ENCODE measurements at regions of chr16 and their contacts with region 1.

Region 1: GRCh38 chr16:788394-789126 is at the start of gene CHTF18:
- DNase-seq: peak; percentile 45
- ATAC-seq: peak; percentile 91
- H3K4me3 ChIP-seq: peak within 1 kb of the TSS; percentile 89
- H3K27ac ChIP-seq: peak within 1 kb of the TSS; percentile 69
- H3K4me1 ChIP-seq: peaks cover 9% of the 10 kb centered on the region
- H3K27me3 ChIP-seq: no peaks in the 10 kb centered on the region
- CTCF ChIP-seq: no peak
- EP300 ChIP-seq: no peak
- POLR2A ChIP-seq: peak; percentile 76
- RAD21 ChIP-seq: no peak
- polyA plus RNA-seq, gene CHTF18: 1.6 to 6.2 TPM

Region 2: DNA sequence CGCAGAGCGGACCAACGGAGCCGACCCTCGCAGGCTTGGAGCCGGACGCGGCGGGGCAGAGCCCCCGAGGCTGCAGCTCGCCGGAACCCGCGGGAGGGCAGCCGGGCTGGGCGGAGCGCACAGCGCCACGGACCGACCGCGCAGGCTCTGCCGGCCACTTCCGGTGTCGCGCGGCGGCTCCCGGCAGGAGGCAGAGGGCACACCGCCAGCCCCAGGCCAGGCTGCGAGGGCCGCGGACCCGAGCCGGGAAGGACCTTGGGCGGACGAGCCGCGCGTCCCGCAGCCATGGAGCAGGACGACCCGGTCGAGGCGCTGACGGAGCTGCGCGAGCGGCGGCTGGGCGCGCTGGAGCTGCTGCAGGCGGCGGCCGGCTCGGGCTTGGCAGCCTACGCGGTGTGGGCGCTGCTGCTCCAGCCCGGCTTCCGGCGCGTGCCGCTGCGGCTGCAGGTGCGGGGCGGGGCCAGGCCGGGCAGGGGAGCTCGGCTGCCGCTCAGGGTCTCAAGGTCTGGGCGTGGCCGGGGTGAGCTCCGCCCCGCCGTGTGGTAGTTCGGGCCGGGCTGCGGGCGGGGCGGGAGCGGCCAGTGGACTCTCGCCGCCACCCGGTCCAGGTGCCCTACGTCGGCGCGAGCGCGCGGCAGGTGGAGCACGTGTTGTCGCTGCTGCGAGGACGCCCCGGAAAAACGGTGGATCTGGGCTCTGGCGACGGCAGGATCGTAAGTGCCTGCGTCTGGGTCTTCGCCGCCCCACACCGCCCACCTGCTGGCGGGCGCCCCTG is 67.4 kb before region 1 on chr16 and contains the start of gene ANTKMT:
- CTCF ChIA-PET with region 1: interaction called, 16 read pairs
- POLR2A ChIA-PET with region 1: interaction called, 12 read pairs
- RAD21 ChIA-PET with region 1: interaction called, 10 read pairs
- SMC1A ChIA-PET with region 1: interaction called, 3 read pairs
- in situ Hi-C with region 1: no loop called
- intact Hi-C with region 1: no loop called
- DNase-seq: no peak
- ATAC-seq: peak; percentile 87
- H3K4me3 ChIP-seq: peak within 1 kb of the TSS; percentile 86
- H3K27ac ChIP-seq: peak within 1 kb of the TSS; percentile 87
- H3K4me1 ChIP-seq: peaks cover 16% of the 10 kb centered on the region
- H3K27me3 ChIP-seq: no peaks in the 10 kb centered on the region
- CTCF ChIP-seq: no peak
- EP300 ChIP-seq: no peak
- POLR2A ChIP-seq: no peak
- RAD21 ChIP-seq: no peak
- polyA plus RNA-seq, gene ANTKMT: 0.58 to 3.1 TPM

Region 3: DNA sequence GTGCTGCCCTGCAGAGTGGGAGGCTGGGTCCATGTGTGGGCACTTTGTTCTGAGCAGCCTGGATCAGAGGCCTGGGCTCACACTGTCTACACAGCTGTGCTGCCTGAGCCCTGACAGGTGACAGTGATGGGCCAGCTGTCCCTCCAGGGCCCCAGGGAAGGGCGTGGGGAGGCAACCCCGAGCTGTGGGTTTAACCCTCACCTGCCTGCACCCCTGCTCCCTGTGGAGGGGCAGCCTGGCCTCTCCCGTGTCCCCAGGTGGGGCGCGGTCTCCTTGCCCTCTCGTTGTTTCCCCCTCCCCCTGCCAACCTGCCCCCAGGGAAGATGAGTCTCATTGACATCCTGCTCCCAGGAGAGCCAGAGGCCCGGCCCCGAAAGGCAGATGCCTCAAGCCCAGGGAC is 51.4 kb after region 1 on chr16:
- CTCF ChIA-PET with region 1: no interaction called
- POLR2A ChIA-PET with region 1: no interaction called
- RAD21 ChIA-PET with region 1: no interaction called
- SMC1A ChIA-PET with region 1: no interaction called
- in situ Hi-C with region 1: no loop called
- intact Hi-C with region 1: no loop called
- DNase-seq: no peak
- ATAC-seq: no peak
- H3K4me3 ChIP-seq: no peak overlapping the region
- H3K27ac ChIP-seq: no peak overlapping the region
- H3K4me1 ChIP-seq: no peaks in the 10 kb centered on the region
- H3K27me3 ChIP-seq: no peaks in the 10 kb centered on the region
- CTCF ChIP-seq: no peak
- EP300 ChIP-seq: no peak
- POLR2A ChIP-seq: no peak
- RAD21 ChIP-seq: no peak

Region 4: GRCh38 chr16:920717-921116 is 132.2 kb after region 1 on chr16:
- CTCF ChIA-PET with region 1: no interaction called
- POLR2A ChIA-PET with region 1: no interaction called
- RAD21 ChIA-PET with region 1: no interaction called
- SMC1A ChIA-PET with region 1: no interaction called
- in situ Hi-C with region 1: no loop called
- intact Hi-C with region 1: no loop called
- DNase-seq: no peak
- ATAC-seq: no peak
- H3K4me3 ChIP-seq: no peak overlapping the region
- H3K27ac ChIP-seq: no peak overlapping the region
- H3K4me1 ChIP-seq: no peaks in the 10 kb centered on the region
- H3K27me3 ChIP-seq: no peaks in the 10 kb centered on the region
- CTCF ChIP-seq: no peak
- EP300 ChIP-seq: no peak
- POLR2A ChIP-seq: no peak
- RAD21 ChIP-seq: no peak

Region 5: DNA sequence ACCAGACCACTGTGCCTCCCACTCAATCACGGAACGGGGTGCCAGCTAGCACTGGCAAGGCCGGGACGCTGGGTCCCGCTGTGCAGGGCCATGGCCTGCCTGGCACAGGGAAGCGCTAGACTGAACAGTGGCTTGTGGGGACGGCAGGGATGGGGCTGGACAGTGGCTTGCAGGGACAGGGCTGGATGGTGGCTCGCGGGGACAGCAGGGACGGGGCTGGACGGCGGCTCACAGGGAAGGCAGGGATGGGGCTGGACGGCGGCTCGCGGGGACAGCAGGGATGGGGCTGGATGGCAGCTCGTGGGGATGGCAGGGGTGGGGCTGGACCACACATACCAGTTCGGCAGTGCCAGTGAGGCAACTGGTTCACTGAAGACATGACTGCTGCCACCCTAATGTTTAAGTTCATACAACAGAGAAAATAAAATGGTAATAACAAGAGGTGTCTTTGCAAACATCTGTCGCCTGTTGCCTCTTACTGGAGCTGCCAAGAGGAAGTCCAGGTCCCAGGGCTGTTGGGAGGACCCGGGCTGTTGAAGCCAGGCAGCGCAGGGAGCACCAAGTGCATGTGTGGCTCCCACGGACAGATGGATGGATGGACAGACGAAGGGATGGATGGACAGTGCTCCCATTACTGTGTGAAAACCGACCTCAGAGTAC is 149.7 kb after region 1 on chr16:
- CTCF ChIA-PET with region 1: no interaction called
- POLR2A ChIA-PET with region 1: no interaction called
- RAD21 ChIA-PET with region 1: no interaction called
- SMC1A ChIA-PET with region 1: no interaction called
- in situ Hi-C with region 1: no loop called
- intact Hi-C with region 1: no loop called
- DNase-seq: no peak
- ATAC-seq: no peak
- H3K4me3 ChIP-seq: no peak overlapping the region
- H3K27ac ChIP-seq: no peak overlapping the region
- H3K4me1 ChIP-seq: no peaks in the 10 kb centered on the region
- H3K27me3 ChIP-seq: no peaks in the 10 kb centered on the region
- CTCF ChIP-seq: no peak
- EP300 ChIP-seq: no peak
- POLR2A ChIP-seq: no peak
- RAD21 ChIP-seq: no peak